Tibial artery (tissue), 4 donors: ENCODE measurements at regions of chr4 and their contacts with region 1.

Region 1: DNA sequence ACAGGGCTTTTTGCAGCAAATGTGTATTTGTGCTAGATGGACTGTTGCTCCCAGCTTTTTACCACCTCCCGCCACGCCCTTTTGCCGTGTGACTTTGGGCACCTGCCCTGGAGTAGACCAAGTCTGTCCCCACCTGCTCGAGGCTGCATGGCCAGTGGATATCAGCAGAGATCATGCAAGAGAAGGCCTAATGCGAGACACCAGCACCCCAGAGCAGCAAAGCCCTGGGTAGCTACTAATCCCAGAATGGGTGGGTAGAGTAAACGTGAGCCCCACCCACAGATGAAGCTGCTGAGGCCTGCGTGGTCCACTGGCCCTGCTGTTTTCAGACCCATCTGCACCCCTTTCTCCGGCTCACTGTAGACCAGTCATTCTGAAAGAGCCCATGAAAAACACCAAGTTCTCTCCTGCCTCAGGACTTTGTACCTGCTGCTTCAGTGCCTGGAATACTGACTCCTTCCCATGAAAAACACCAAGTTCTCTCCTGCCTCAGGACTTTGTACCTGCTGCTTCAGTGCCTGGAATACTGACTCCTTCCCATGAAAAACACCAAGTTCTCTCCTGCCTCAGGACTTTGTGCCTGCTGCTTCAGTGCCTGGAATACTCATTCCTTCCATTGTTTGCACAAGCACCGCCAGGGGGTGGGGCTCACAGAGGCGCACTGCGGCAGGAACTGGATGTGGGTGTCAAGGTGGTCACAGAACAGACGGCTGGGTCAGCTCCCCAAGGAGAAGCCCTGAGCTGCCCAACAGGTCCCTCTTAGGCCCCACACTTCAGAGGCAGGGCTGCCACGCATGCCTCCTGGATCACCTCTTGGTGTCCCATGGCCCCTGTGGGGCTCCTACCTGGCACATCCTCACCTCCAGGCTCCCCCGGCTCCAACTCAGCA is 5.1 kb upstream of the TNIP2 start:
- DNase-seq: peak in 1 of 2 donors; percentile 64
- H3K4me3 ChIP-seq: no peak overlapping the region
- H3K27ac ChIP-seq: no peak overlapping the region
- H3K4me1 ChIP-seq: peaks cover 0 to 14% (median 6%) of the 10 kb centered on the region in 4 donors
- H3K27me3 ChIP-seq: no peaks in the 10 kb centered on the region
- CTCF ChIP-seq: no peak

Region 2: DNA sequence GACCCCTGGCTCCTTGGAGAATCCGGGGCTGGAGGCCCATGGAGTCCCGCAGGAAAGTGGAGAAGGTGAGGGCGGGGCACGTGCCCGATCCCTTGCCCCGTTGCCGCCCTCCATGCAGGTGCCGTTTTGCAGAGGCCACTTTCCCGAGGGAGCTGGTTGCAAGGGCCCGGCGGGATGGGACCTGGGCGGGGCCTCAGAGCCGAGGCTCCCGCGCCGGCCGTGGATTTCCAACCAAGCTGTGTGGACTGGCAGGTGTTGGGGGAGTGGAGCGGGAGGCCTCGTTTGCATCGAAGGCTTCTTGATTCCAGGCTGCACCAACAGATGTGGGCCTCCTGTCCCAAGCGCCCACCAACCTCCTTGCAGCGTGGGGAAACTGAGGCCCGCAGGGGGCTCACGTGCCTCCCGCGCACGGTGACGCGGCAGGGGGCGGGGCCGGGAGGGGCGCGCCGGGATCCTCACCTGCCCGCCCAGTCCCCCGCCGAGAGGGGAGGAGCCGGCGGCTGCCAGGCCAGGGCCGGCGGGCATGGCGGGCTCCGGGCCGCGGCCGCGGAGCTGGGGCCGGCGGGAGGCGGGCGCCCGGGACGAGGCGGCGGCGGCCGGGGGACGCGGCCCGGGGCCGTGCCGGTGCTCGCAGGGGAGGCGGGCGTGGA is 56.5 kb after region 1 on chr4:
- intact Hi-C with region 1: no loop called
- DNase-seq: no peak
- H3K4me3 ChIP-seq: peak overlapping the region; percentile 49 to 65
- H3K27ac ChIP-seq: peak overlapping the region in 1 of 2 donors; percentile 31
- H3K4me1 ChIP-seq: peaks cover 0 to 22% (median 12%) of the 10 kb centered on the region in 4 donors
- H3K27me3 ChIP-seq: peaks cover 0 to 6% of the 10 kb centered on the region in 2 donors
- CTCF ChIP-seq: no peak

Region 3: DNA sequence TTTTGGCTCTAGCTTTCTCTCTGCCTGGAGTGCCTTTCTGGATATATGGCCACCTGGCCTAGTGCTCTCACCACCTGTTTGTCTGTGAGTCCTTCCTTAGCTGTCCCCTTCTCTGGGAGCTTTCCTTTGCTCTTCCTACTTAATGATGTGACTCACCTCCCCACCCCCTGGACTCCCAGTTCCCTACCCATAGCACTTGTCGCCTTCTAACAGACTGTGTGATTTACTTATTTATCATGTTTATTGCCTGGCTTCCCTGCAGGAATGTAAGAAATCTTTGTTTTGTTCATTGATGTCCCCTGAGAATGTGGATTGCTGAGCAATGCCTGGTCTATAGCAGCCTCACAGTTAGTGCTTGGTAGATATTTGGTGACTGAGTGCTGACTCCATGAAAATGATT is 101.2 kb after region 1 on chr4:
- intact Hi-C with region 1: loop called (anchors 10 kb)
- DNase-seq: no peak
- H3K4me3 ChIP-seq: no peak overlapping the region
- H3K27ac ChIP-seq: no peak overlapping the region
- H3K4me1 ChIP-seq: peaks cover 0 to 100% (median 65%) of the 10 kb centered on the region in 4 donors
- H3K27me3 ChIP-seq: no peaks in the 10 kb centered on the region
- CTCF ChIP-seq: no peak

Region 4: DNA sequence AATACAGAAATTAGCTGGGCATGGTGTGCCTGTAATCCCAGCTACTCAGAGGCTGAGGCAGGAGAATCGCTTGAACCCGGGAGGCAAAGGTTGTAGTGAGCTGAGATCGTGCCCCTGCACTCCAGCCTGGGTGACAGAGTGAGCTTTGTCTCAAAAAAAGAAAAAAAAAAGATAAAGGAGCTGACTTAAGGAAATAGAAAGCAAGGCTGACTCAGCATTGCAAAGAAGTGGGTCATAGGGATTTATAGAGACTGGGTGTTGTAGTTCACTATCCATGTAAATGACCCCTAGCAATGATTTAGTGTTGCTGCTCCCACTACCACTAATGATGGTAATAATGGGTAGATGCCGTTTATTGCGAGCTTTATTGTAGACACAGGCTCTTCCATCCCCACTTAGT is 130.0 kb after region 1 on chr4:
- intact Hi-C with region 1: no loop called
- DNase-seq: no peak
- H3K4me3 ChIP-seq: no peak overlapping the region
- H3K27ac ChIP-seq: no peak overlapping the region
- H3K4me1 ChIP-seq: peaks cover 0 to 3% (median 0%) of the 10 kb centered on the region in 4 donors
- H3K27me3 ChIP-seq: no peaks in the 10 kb centered on the region
- CTCF ChIP-seq: no peak

Region 5: GRCh38 chr4:2934813-2935761 is 173.8 kb after region 1 on chr4:
- intact Hi-C with region 1: loop called (anchors 10 kb)
- DNase-seq: peak; percentile 93 to 96
- H3K4me3 ChIP-seq: peak overlapping the region; percentile 80 to 97
- H3K27ac ChIP-seq: peak overlapping the region; percentile 82 to 92
- H3K4me1 ChIP-seq: peaks cover 0 to 53% (median 28%) of the 10 kb centered on the region in 4 donors
- H3K27me3 ChIP-seq: no peaks in the 10 kb centered on the region
- CTCF ChIP-seq: no peak

Region 6: DNA sequence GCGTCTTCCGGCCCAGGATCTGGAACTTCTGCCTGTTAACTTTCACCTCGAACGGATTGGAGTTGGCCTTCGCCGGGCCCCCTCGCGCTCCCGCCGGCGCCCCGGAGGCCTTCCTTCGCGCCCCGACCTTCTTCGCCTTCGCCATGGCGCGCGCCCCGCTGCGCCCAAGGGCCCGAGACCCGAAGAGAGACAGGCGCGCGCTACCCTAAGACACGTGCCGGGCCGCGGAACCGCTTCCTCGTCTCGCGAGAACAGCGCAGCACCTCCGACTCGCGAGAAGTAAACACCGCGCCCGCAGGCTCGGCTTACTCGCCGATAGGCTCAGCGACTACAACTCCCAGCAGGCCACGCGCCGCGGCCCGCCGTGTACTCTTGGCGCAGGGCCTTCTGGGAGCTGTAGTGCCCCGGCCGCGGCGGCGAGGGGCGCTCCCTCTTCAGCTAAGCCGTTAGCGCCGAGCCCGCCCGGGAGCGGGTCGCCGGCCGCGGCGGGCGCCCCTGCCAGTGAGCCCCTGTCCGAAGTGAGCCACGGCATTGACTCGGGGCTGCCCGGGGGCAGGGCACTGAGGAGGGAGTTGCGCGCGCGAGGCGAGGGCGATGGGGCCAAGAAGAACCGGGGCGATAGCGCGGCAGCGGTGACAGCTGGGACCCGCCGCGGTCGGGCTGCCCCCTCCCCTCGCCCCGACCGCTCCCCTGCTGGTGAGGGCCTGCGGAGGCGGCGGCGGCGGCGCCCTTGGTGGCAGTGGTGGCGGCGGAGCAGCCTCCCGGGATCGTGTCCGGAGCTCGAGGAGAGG is 202.1 kb after region 1 on chr4 and contains the starts of genes GRK4 and NOP14:
- intact Hi-C with region 1: loop called (anchors 5 kb)
- DNase-seq: peak; percentile 96 to 99
- H3K4me3 ChIP-seq: peak within 1 kb of the TSS; percentile 80 to 82
- H3K27ac ChIP-seq: peak within 1 kb of the TSS; percentile 80 to 88
- H3K4me1 ChIP-seq: peaks cover 3 to 35% (median 20%) of the 10 kb centered on the region in 4 donors
- H3K27me3 ChIP-seq: no peaks in the 10 kb centered on the region
- CTCF ChIP-seq: peak in 1 of 2 experiments; percentile 28

Region 7: DNA sequence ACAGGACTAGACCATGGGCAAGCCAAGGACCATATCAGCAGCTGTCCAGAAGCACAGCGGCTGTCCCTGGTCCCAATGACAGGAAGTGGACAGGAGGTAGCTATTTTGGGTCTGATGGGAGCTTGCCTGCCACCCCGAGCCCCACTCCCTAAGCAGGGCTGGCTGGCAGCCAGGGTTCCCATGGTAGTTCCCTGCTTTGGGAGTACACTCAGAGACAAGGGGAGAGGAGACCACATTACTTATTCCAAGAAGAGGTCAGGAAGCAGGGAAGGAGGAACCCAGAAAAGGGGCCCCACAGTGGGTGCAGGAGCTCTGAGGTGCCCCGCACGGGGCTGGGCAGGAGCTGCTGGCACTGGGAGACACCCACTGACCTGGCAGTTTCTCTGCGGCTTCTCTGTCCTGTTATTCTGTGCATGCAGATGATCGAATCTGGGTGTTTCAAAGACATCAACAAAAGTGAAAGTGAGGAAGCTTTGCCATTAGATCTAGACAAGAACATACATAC is 276.7 kb after region 1 on chr4:
- intact Hi-C with region 1: loop called (anchors 5 kb)
- DNase-seq: peak; percentile 50 to 59
- H3K4me3 ChIP-seq: peak overlapping the region; percentile 2 to 32
- H3K27ac ChIP-seq: no peak overlapping the region
- H3K4me1 ChIP-seq: peaks cover 0 to 33% (median 19%) of the 10 kb centered on the region in 4 donors
- H3K27me3 ChIP-seq: peaks cover 0 to 3% of the 10 kb centered on the region in 2 donors
- CTCF ChIP-seq: no peak